ENCODE measurements at regions of chr1 and their contacts with region 1.

Region 1: DNA sequence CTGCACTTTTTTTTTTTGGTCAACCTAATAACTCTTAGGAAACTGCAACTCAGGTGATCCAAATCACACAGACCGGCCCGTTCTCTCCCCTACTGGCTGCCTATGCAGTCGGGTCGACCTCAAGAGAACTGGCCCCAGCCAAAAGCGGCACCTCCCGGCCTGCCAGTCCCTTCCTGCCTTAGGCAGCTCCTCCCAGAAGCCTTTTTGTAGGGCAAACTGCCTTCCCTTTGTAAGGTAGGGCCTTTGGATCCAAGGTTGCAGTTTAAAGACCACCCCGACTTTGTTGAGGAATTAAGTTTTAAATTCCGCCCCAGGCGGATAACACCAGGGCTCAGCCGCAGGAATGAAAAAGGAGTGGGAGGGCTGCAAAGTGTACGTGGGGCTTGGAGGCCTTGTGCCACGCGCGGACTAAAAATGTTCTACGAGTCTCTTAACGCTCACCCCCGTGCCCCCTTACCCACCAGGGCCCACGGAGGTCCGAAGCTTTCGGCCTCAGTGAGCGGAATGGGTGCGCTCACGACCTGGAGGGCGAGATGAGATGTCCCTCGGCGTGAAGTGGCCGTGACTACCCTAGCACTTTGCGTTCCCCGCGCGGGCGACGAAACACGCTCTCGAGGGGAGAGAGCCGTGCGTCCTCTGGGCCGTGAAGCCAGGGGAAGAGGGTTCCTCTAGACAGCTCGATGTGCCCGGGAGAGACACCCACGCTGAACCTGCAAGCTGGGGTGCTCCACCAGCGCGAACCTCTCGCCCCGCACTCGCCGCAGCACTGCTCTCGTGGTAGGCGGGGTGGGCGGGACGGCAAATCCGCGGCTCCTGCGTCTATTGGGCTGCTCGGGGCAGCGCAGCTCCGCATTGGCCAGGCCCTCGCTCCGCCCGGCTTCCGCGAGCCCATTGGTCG is 489 bp upstream of the ST3GAL3 start:
- DNase-seq: peak; percentile 95 to 96
- ATAC-seq: peak; percentile 93 to 96 (median 94)
- H3K4me3 ChIP-seq: peak overlapping the region; percentile 96
- H3K27ac ChIP-seq: peak overlapping the region; percentile 97
- H3K4me1 ChIP-seq: peaks cover 30% of the 10 kb centered on the region
- H3K27me3 ChIP-seq: no peaks in the 10 kb centered on the region
- CTCF ChIP-seq: no peak

Region 2: GRCh38 chr1:43660355-43660754 is 46.5 kb before region 1 on chr1:
- intact Hi-C with region 1: loop called in 1 of 2 experiments (anchors 5 kb)
- DNase-seq: no peak
- ATAC-seq: no peak
- H3K4me3 ChIP-seq: no peak overlapping the region
- H3K27ac ChIP-seq: no peak overlapping the region
- H3K4me1 ChIP-seq: no peaks in the 10 kb centered on the region
- H3K27me3 ChIP-seq: no peaks in the 10 kb centered on the region
- CTCF ChIP-seq: no peak

Region 3: GRCh38 chr1:43671626-43672330 is 35.1 kb before region 1 on chr1:
- intact Hi-C with region 1: loop called in 1 of 2 experiments (anchors 5 kb)
- DNase-seq: no peak
- ATAC-seq: peak in 3 of 4 donors; percentile 44 to 65 (median 51)
- H3K4me3 ChIP-seq: no peak overlapping the region
- H3K27ac ChIP-seq: no peak overlapping the region
- H3K4me1 ChIP-seq: peaks cover 7% of the 10 kb centered on the region
- H3K27me3 ChIP-seq: no peaks in the 10 kb centered on the region
- CTCF ChIP-seq: no peak

Region 4: DNA sequence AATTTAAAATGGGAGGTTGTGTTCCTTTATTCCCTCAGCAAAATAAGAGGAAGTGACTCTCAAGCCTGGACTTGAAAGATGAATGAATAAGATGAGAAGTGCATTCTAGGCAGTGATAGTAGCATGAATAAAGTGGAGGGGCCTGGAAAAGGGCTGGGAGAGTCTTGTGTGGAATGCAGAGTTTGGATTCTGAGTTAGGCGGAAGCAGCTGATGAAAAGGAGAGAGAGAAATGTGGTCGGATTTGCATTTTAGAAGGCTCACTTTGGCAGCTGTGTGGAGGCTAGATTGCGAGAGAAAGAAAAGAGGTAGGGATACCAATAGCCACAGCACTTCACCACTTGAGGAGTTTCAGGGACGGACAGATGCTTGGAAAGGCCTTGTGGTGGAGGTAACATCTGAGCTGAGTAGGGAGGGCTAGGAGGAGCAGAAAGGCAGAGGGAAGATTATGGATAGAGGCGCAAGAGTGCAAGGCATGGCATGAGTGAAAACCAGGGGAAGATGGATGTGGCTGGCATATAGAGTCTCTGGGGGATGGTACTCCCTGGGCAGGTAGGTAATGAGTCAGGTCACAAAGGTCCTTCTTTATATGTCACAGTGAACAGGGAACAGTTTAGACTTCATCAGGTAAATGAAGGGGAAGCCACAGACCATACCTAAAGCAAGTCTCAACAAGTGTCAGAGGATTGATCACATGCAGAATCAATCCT is 60.1 kb after region 1 on chr1:
- intact Hi-C with region 1: no loop called
- DNase-seq: no peak
- ATAC-seq: no peak
- H3K4me3 ChIP-seq: no peak overlapping the region
- H3K27ac ChIP-seq: no peak overlapping the region
- H3K4me1 ChIP-seq: peaks cover 20% of the 10 kb centered on the region
- H3K27me3 ChIP-seq: no peaks in the 10 kb centered on the region
- CTCF ChIP-seq: no peak

Region 5: GRCh38 chr1:43858328-43858731 is 151.5 kb after region 1 on chr1:
- intact Hi-C with region 1: no loop called
- DNase-seq: peak; percentile 68 to 86
- ATAC-seq: peak; percentile 91 to 95 (median 92)
- H3K4me3 ChIP-seq: no peak overlapping the region
- H3K27ac ChIP-seq: peak overlapping the region; percentile 78
- H3K4me1 ChIP-seq: peaks cover 34% of the 10 kb centered on the region
- H3K27me3 ChIP-seq: no peaks in the 10 kb centered on the region
- CTCF ChIP-seq: no peak

Measured in psoas muscle (tissue), 8 donors.